GM12878 (cell line): ENCODE measurements at regions of chr19 and their contacts with region 1.

Region 1: DNA sequence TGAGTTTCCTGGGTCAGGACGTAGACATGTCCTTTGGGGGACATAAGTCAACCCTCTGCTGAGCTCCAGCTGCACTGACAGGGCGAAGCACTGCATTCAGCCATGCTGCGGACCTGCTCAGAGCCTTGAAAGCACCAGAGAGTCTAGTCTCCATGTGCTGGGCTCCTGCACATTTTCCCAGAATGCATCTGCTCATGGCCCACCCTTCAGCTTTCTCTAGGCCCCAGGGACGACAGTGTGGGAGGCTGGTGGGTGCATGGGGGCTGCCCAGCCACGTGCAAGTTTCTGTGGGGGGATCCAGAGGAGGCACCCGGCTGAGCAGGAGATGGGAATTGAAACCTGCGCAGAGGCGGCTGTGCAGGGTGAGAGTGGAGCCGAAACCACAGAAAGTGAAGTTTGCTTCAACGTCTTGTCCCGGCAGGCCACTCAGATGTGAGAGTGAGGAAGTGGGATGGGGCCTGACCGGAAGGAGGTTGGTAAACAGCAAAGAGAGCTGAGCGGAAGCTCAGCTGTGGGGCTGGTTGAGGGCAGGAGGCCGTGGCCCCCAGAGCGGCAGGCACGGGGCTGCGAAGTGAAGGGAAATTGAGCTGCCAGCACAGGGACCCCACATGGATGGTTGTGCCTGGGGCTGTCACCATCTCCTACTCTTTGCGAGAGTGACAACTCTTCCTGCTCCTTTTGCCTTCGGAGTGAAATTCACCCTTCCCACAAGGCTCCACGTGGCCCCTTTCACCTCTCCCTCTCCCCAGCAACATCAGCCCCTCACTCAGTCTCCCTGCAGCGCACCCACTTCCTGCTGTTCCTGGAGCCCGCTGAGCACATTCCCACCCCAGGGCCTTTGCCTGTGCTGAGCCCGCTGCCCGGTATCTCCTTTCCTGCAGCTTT is 11.8 kb downstream of the PGLS start:
- DNase-seq: peak; percentile 92
- ATAC-seq: peak; percentile 92
- H3K4me3 ChIP-seq: peak overlapping the region; percentile 23; the same call in 1 of the 2 replicates
- H3K27ac ChIP-seq: peak overlapping the region; percentile 95
- H3K4me1 ChIP-seq: peaks cover 46% of the 10 kb centered on the region
- H3K27me3 ChIP-seq: no peaks in the 10 kb centered on the region
- CTCF ChIP-seq: no peak
- EP300 ChIP-seq: peak; percentile 58 to 82
- POLR2A ChIP-seq: peak; percentile 82
- RAD21 ChIP-seq: peak; percentile 18; the same call in 1 of the 2 replicates

Region 2: GRCh38 chr19:17511724-17512573 is 11.3 kb before region 1 on chr19:
- CTCF ChIA-PET with region 1: interaction called, 15 read pairs
- POLR2A ChIA-PET with region 1: interaction called, 33 read pairs
- RAD21 ChIA-PET with region 1: interaction called, 14 read pairs
- SMC1A ChIA-PET with region 1: interaction called, 15 read pairs
- in situ Hi-C with region 1: no loop called
- intact Hi-C with region 1: no loop called
- DNase-seq: peak; percentile 77
- ATAC-seq: peak; percentile 88
- H3K4me3 ChIP-seq: peak overlapping the region; percentile 88
- H3K27ac ChIP-seq: peak overlapping the region; percentile 97
- H3K4me1 ChIP-seq: peaks cover 8% of the 10 kb centered on the region
- H3K27me3 ChIP-seq: no peaks in the 10 kb centered on the region
- CTCF ChIP-seq: peak; percentile 30 to 57 (median 37); a peak in 5 of 6 replicates
- EP300 ChIP-seq: peak; percentile 46 to 64; a peak in 1 of 4 replicates
- POLR2A ChIP-seq: peak; percentile 87
- RAD21 ChIP-seq: peak; percentile 22; the same call in 1 of the 2 replicates

Region 3: DNA sequence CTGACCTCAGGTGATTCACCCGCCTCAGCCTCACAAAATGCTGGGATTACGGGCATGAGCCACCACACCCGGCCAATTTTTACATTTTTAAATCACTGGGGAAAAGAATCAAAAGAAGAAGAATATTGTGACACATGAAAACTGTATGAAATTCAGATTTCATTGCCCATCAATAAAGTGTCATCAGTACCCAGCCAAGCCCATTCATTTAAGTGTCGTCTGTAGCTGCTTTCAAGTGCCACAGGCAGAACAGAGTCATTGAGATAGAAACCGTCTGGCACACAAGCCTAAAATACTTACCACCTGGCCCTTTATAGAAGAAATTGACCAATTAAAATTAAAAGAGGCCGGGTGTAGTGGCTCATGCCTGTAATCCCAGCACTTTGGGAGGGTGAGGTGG is 47.6 kb after region 1 on chr19:
- CTCF ChIA-PET with region 1: interaction called, 19 read pairs
- POLR2A ChIA-PET with region 1: interaction called, 3 read pairs
- RAD21 ChIA-PET with region 1: interaction called, 3 read pairs
- SMC1A ChIA-PET with region 1: no interaction called
- in situ Hi-C with region 1: no loop called
- intact Hi-C with region 1: no loop called
- DNase-seq: no peak
- ATAC-seq: no peak
- H3K4me3 ChIP-seq: no peak overlapping the region
- H3K27ac ChIP-seq: no peak overlapping the region
- H3K4me1 ChIP-seq: no peaks in the 10 kb centered on the region
- H3K27me3 ChIP-seq: no peaks in the 10 kb centered on the region
- CTCF ChIP-seq: no peak
- EP300 ChIP-seq: no peak
- POLR2A ChIP-seq: no peak
- RAD21 ChIP-seq: no peak